ENCODE measurements at regions of chr4 and their contacts with region 1.

Region 1: GRCh38 chr4:74451200-74451661 is 6.3 kb downstream of the AREG start:
- DNase-seq: no peak

Region 2: DNA sequence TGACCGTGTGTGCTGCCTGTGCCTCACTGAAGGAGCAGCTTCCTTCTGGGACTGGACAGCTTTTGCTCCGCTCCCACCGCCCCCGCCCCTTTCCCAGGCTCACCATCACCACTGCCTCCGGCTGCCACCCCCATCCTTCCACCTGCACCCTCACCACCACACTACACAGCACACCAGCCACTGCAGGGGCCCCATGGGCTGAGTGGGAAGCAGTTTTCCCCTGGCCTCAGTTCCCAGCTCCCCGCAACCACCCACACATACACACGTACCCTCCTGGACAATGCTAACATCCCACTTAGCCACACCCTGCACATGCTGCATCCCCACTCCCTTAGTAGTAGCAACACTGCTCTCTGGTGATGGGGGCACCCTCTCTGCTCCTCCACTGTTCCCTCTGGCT is 1352.1 kb before region 1 on chr4:
- intact Hi-C with region 1: loop called in 1 of 2 experiments (anchors 5 kb)
- DNase-seq: no peak

Region 3: GRCh38 chr4:76105652-76106051 is 1654.4 kb after region 1 on chr4:
- intact Hi-C with region 1: no loop called
- DNase-seq: no peak